Naive thymus-derived CD4-positive, alpha-beta T cell (primary cell): ENCODE measurements at regions of chr3 and their contacts with region 1.

Region 1: DNA sequence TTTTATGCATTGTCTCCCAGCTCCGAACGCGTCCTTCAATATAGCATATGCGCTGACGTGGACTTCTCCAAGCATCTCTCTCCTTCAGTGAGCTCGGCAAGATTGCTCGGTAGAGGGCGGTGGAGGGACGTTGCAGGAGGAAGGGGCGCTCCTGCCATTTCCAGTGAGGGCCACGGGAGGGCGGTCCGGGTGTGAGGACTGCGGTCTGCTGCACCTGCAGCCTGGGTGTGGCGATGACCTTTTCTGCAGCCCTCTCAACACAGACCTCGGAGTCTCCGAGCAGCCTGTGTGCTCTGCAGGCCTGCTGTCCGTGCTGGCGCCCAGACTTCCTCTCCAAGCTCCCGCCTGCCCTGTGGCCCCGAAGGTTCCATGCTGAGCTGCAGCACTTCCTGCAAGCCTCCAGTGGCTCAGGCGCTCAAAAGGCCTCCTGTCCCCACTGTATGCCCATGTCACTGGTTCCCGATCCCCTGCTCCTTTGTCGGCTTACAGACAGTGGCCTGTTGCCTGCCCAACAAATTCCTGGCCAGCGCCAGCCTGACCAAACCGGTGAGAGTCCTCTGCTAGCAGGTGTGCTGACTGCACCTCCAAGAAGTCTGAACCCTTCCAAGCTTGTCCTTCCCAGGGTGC is 8.9 kb upstream of the RTP3 start:
- DNase-seq: peak; percentile 82 to 92 (median 89)
- ATAC-seq: peak; percentile 99
- H3K4me3 ChIP-seq: peak overlapping the region; percentile 54
- H3K4me3 Mint-ChIP-seq: peak overlapping the region; percentile 38 to 82 (median 68)
- H3K27ac ChIP-seq: no peak overlapping the region
- H3K27ac Mint-ChIP-seq: peak overlapping the region in 6 of 9 donors; percentile 7 to 77 (median 56)
- H3K4me1 ChIP-seq: peaks cover 7 to 15% of the 10 kb centered on the region in 2 donors
- H3K4me1 Mint-ChIP-seq: peaks cover 10 to 21% (median 18%) of the 10 kb centered on the region in 7 donors
- H3K27me3 ChIP-seq: no peaks in the 10 kb centered on the region
- H3K27me3 Mint-ChIP-seq: peaks cover 0 to 31% (median 0%) of the 10 kb centered on the region in 5 donors

Region 2: DNA sequence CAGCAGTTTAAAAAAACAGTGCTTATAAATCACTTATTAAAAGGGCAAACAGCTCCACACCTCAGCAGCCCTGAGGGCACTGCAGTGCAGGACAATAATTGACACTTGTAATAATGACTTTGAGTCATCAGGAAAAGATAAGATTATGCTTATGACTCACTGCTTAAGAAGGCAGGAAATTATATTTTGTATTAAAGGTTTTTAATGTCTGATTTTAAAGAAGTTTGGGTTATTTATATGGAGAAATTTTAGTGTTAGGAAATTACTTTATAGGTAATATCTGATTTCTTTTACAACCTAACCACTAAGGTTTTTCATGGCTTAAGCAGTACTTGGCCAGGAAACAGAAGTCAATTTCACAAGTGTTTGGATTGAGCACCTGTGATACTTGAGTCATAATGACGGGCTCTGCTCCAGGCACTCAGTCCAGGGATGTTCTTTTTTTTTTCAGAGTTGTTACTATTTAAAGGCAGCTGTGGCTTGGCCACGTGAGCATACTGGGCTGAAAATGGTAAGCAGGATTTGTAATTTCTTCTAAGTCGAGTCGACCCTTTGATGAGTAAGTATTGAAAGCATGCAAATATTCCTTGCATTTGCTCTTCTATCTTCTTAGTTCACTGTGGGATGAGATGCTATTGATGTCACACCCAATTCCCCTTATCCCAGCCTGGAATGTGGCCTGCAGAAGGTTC is 670.9 kb before region 1 on chr3:
- CTCF ChIA-PET with region 1: no interaction called
- POLR2A ChIA-PET with region 1: no interaction called
- intact Hi-C with region 1: no loop called
- DNase-seq: no peak
- ATAC-seq: no peak
- H3K4me3 ChIP-seq: no peak overlapping the region
- H3K4me3 Mint-ChIP-seq: no peak overlapping the region
- H3K27ac ChIP-seq: no peak overlapping the region
- H3K27ac Mint-ChIP-seq: no peak overlapping the region
- H3K4me1 ChIP-seq: no peaks in the 10 kb centered on the region
- H3K4me1 Mint-ChIP-seq: peaks cover 0 to 5% (median 0%) of the 10 kb centered on the region in 7 donors
- H3K27me3 ChIP-seq: no peaks in the 10 kb centered on the region
- H3K27me3 Mint-ChIP-seq: peaks cover 0 to 5% (median 0%) of the 10 kb centered on the region in 5 donors

Region 3: GRCh38 chr3:46293991-46294833 is 194.6 kb before region 1 on chr3:
- CTCF ChIA-PET with region 1: no interaction called
- POLR2A ChIA-PET with region 1: no interaction called
- intact Hi-C with region 1: no loop called
- DNase-seq: peak in 1 of 9 donors; percentile 73
- ATAC-seq: peak; percentile 10
- H3K4me3 ChIP-seq: no peak overlapping the region
- H3K4me3 Mint-ChIP-seq: peak overlapping the region in 1 of 10 donors; percentile 55
- H3K27ac ChIP-seq: no peak overlapping the region
- H3K27ac Mint-ChIP-seq: peak overlapping the region in 4 of 9 donors; percentile 1 to 66 (median 24)
- H3K4me1 ChIP-seq: peaks cover 7 to 65% of the 10 kb centered on the region in 2 donors
- H3K4me1 Mint-ChIP-seq: peaks cover 13 to 71% (median 34%) of the 10 kb centered on the region in 7 donors
- H3K27me3 ChIP-seq: no peaks in the 10 kb centered on the region
- H3K27me3 Mint-ChIP-seq: peaks cover 0 to 12% (median 0%) of the 10 kb centered on the region in 5 donors

Region 4: GRCh38 chr3:46549408-46549904 is 60.6 kb after region 1 on chr3:
- CTCF ChIA-PET with region 1: interaction called, 42 read pairs
- POLR2A ChIA-PET with region 1: no interaction called
- intact Hi-C with region 1: no loop called
- DNase-seq: no peak
- ATAC-seq: no peak
- H3K4me3 ChIP-seq: no peak overlapping the region
- H3K4me3 Mint-ChIP-seq: no peak overlapping the region
- H3K27ac ChIP-seq: no peak overlapping the region
- H3K27ac Mint-ChIP-seq: peak overlapping the region in 4 of 9 donors; percentile 13 to 76 (median 36)
- H3K4me1 ChIP-seq: no peaks in the 10 kb centered on the region
- H3K4me1 Mint-ChIP-seq: peaks cover 7 to 28% (median 25%) of the 10 kb centered on the region in 7 donors
- H3K27me3 ChIP-seq: no peaks in the 10 kb centered on the region
- H3K27me3 Mint-ChIP-seq: peaks cover 0 to 56% (median 5%) of the 10 kb centered on the region in 5 donors

Region 5: DNA sequence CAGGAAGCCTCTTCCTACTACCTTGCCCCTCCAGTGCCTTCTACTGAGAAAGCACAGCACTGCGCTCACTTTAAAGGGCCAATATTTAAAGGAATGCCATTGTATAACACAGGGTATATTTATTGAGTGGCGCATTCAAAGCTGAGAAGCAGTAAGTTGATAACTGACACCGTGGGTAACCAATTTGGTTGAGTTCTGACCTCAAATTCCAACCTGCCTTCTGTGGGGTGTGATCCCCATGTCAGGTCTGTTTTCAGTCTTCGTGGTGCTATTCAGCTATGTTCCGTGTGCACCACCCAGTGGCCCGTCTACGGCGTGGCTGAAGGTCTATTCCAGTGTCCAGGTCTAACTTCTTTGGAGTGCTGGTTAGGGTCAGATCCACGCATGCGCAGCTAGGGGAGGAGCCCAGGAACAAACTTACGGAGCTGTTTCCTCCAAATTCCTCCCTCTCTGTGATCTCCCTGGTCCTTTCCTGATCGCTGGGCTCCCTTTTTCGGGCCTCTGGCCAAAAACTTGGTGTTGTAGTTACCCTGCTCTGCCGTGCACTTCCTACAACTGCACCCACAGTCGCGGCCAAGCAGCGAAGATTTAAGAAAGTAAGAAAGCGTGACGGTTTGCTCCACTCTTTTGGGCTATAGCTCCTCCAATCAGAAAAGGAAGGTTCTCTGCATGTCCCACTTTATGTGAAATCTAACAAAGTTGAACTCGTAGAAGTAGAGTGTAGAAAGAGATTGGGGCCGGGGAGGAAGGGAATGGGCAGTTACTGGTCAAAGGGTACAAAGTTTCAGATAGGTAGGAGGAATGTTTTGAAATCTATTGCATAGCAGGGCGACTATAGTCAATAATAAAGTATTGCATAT is 69.6 kb after region 1 on chr3:
- CTCF ChIA-PET with region 1: interaction called, 197 read pairs
- POLR2A ChIA-PET with region 1: interaction called, 20 read pairs
- intact Hi-C with region 1: loop called (anchors 1 kb)
- DNase-seq: peak; percentile 58 to 77 (median 70)
- ATAC-seq: peak; percentile 99
- H3K4me3 ChIP-seq: peak overlapping the region; percentile 37
- H3K4me3 Mint-ChIP-seq: peak overlapping the region; percentile 79 to 89 (median 80)
- H3K27ac ChIP-seq: peak overlapping the region; percentile 11
- H3K27ac Mint-ChIP-seq: peak overlapping the region; percentile 19 to 93 (median 51)
- H3K4me1 ChIP-seq: peaks cover 5 to 12% of the 10 kb centered on the region in 2 donors
- H3K4me1 Mint-ChIP-seq: peaks cover 9 to 20% (median 17%) of the 10 kb centered on the region in 7 donors
- H3K27me3 ChIP-seq: no peaks in the 10 kb centered on the region
- H3K27me3 Mint-ChIP-seq: peaks cover 0 to 72% (median 0%) of the 10 kb centered on the region in 5 donors

Region 6: DNA sequence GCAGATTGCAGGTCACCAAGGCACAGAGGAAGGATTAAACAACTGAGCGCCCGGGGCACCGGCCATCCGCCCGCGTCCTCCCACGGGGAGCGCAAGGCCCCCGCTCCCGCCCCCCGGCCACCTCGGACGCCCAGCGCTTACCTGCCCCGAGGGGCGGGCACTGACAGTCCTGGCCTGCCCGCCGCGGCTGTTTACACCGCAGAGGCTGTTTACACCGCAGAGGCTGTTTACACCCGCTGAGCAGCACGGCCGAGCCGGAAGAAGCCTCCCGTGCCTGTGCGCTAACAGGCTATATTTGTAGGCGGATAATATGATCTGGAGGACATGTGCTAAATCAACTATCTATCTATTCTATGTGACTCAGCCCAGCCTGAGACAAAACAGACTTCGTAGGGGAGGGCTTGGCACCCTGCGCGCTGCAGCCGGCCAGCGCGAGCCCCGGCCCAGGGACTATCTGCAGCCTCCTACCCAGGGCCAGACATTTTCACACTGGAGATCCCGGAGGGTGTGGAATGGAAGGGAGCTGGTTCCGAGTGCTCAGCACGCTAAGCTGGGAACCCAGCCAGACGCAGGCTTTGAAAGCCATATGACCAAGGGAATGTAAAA is 77.3 kb after region 1 on chr3 and contains the start of gene LRRC2:
- CTCF ChIA-PET with region 1: interaction called, 197 read pairs
- POLR2A ChIA-PET with region 1: interaction called, 7 read pairs
- intact Hi-C with region 1: loop called in 1 of 2 experiments (anchors 2 kb)
- DNase-seq: peak in 6 of 9 donors; percentile 12 to 29 (median 25)
- ATAC-seq: peak; percentile 60
- H3K4me3 ChIP-seq: peak within 1 kb of the TSS; percentile 47
- H3K4me3 Mint-ChIP-seq: peak within 1 kb of the TSS; percentile 72 to 86 (median 78)
- H3K27ac ChIP-seq: no peak within 1 kb of the TSS
- H3K27ac Mint-ChIP-seq: peak within 1 kb of the TSS in 4 of 9 donors; percentile 4 to 68 (median 50)
- H3K4me1 ChIP-seq: peaks cover 0 to 11% of the 10 kb centered on the region in 2 donors
- H3K4me1 Mint-ChIP-seq: peaks cover 8 to 18% (median 15%) of the 10 kb centered on the region in 7 donors
- H3K27me3 ChIP-seq: no peaks in the 10 kb centered on the region
- H3K27me3 Mint-ChIP-seq: peaks cover 15 to 62% (median 30%) of the 10 kb centered on the region in 5 donors
- total RNA-seq, gene LRRC2: 0.10 to 0.35 (median 0.22) TPM in 4 of 5 experiments, not detected in the other

Region 7: GRCh38 chr3:46629551-46630517 is 141.0 kb after region 1 on chr3:
- CTCF ChIA-PET with region 1: interaction called, 113 read pairs
- POLR2A ChIA-PET with region 1: interaction called, 18 read pairs
- intact Hi-C with region 1: loop called (anchors 1 kb)
- DNase-seq: peak; percentile 61 to 82 (median 77)
- ATAC-seq: peak; percentile 98
- H3K4me3 ChIP-seq: peak overlapping the region; percentile 73
- H3K4me3 Mint-ChIP-seq: peak overlapping the region; percentile 67 to 86 (median 79)
- H3K27ac ChIP-seq: peak overlapping the region; percentile 62
- H3K27ac Mint-ChIP-seq: peak overlapping the region; percentile 76 to 97 (median 90)
- H3K4me1 ChIP-seq: peaks cover 9 to 29% of the 10 kb centered on the region in 2 donors
- H3K4me1 Mint-ChIP-seq: peaks cover 13 to 42% (median 30%) of the 10 kb centered on the region in 7 donors
- H3K27me3 ChIP-seq: no peaks in the 10 kb centered on the region
- H3K27me3 Mint-ChIP-seq: peaks cover 0 to 17% (median 0%) of the 10 kb centered on the region in 5 donors

Region 8: GRCh38 chr3:46695177-46695961 is 206.5 kb after region 1 on chr3:
- CTCF ChIA-PET with region 1: interaction called, 5 read pairs
- POLR2A ChIA-PET with region 1: interaction called, 3 read pairs
- intact Hi-C with region 1: loop called in 1 of 2 experiments (anchors 2 kb)
- DNase-seq: peak; percentile 19 to 58 (median 50)
- ATAC-seq: peak; percentile 37
- H3K4me3 ChIP-seq: peak overlapping the region; percentile 6
- H3K4me3 Mint-ChIP-seq: peak overlapping the region; percentile 40 to 94 (median 76)
- H3K27ac ChIP-seq: peak overlapping the region; percentile 75
- H3K27ac Mint-ChIP-seq: peak overlapping the region; percentile 76 to 95 (median 92)
- H3K4me1 ChIP-seq: peaks cover 32 to 78% of the 10 kb centered on the region in 2 donors
- H3K4me1 Mint-ChIP-seq: peaks cover 32 to 94% (median 69%) of the 10 kb centered on the region in 7 donors
- H3K27me3 ChIP-seq: no peaks in the 10 kb centered on the region
- H3K27me3 Mint-ChIP-seq: peaks cover 0 to 39% (median 0%) of the 10 kb centered on the region in 5 donors